ENCODE measurements at regions of chr2 and their contacts with region 1.

Region 1: GRCh38 chr2:176638167-176639015 is 369.1 kb downstream of the MTX2 start:
- DNase-seq: peak; percentile 89
- H3K4me3 ChIP-seq: peak overlapping the region; percentile 75 to 82
- H3K27ac ChIP-seq: peak overlapping the region; percentile 73 to 96
- H3K4me1 ChIP-seq: peaks cover 26 to 28% of the 10 kb centered on the region in 2 experiments; a peak in 3 of 4 replicates
- H3K27me3 ChIP-seq: no peaks in the 10 kb centered on the region
- CTCF ChIP-seq: peak; percentile 91
- EP300 ChIP-seq: peak in 1 of 2 experiments; percentile 74; a peak in 1 of 4 replicates
- RAD21 ChIP-seq: peak; percentile 81

Region 2: GRCh38 chr2:176118601-176119339 is 519.6 kb before region 1 on chr2:
- CTCF ChIA-PET with region 1: interaction called, 1,047 read pairs
- POLR2A ChIA-PET with region 1: interaction called, 19 read pairs
- DNase-seq: peak; percentile 66
- H3K4me3 ChIP-seq: no peak overlapping the region
- H3K27ac ChIP-seq: no peak overlapping the region
- H3K4me1 ChIP-seq: peaks cover 0 to 17% of the 10 kb centered on the region in 2 experiments; a peak in 1 of 4 replicates
- H3K27me3 ChIP-seq: peaks cover 40% of the 10 kb centered on the region
- CTCF ChIP-seq: peak; percentile 66
- EP300 ChIP-seq: no peak
- RAD21 ChIP-seq: peak; percentile 41

Region 3: GRCh38 chr2:176140513-176141317 is 497.7 kb before region 1 on chr2:
- CTCF ChIA-PET with region 1: interaction called, 1,047 read pairs
- POLR2A ChIA-PET with region 1: interaction called, 21 read pairs
- DNase-seq: peak; percentile 96
- H3K4me3 ChIP-seq: peak overlapping the region; percentile 61 to 79
- H3K27ac ChIP-seq: peak overlapping the region; percentile 58 to 63
- H3K4me1 ChIP-seq: peaks cover 5 to 27% of the 10 kb centered on the region in 2 experiments; a peak in 2 of 4 replicates
- H3K27me3 ChIP-seq: no peaks in the 10 kb centered on the region
- CTCF ChIP-seq: peak; percentile 87
- EP300 ChIP-seq: no peak
- RAD21 ChIP-seq: peak; percentile 80

Region 4: DNA sequence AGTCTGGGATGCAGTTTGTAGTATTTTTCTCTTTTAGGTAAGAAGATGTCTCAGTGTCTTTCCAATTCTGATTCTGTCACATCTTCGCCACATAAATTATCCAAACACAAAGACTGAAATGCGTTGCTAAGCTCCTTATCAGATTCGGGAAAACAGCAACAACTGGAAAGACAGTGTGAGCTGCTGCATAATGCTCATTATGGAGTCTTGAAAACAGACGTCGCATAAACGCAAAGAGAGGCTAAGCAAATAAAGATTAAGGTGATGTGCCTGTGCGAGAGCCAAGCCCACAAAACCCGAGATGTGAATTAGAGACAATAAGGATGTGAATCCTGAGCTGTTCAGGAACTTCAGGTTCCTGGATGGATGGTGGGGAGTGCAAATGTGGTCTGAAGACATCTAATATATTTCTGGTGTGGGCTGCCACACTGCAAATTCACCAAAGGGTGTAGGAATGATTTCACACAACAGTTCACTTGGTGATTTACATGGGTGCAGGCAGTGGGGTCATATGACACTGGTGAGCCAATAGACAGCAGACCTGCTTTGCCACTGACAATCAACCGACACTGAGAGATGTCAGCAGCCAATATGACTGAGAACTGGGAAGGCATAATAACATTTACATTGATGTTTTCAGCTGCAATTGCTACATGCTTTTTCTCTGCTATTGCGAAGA is 173.4 kb before region 1 on chr2:
- CTCF ChIA-PET with region 1: interaction called, 11 read pairs
- POLR2A ChIA-PET with region 1: interaction called, 4 read pairs
- DNase-seq: peak; percentile 58
- H3K4me3 ChIP-seq: peak overlapping the region in 1 of 2 experiments; percentile 4; a peak in 1 of 4 replicates
- H3K27ac ChIP-seq: peak overlapping the region in 1 of 2 experiments; percentile 88; a peak in 2 of 4 replicates
- H3K4me1 ChIP-seq: peaks cover 9 to 15% of the 10 kb centered on the region in 2 experiments; a peak in 3 of 4 replicates
- H3K27me3 ChIP-seq: no peaks in the 10 kb centered on the region
- CTCF ChIP-seq: no peak
- EP300 ChIP-seq: no peak
- RAD21 ChIP-seq: no peak

Region 5: DNA sequence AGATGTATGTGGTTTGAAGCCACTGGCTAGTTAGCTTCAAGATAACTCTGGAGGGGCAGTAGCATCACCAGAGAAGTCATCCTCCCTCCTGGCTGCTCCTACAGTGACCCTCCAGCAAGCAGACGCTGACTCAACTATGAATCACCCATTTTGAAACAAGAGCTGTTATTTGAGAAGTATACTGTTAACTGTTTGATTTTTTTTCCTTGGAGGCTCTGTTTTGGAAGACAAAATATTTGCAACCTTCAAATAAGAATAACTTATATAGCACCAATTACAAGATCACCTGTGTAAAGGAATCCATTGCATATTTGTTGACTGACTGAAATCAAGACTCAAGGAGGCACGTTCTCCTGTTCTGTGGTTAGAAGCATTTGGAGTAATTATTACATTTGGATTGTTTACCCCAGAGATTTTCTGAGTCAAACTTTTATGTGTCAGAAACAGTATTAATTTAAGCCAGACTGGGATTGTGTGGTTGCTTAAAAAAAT is 55.4 kb before region 1 on chr2:
- CTCF ChIA-PET with region 1: interaction called, 21 read pairs
- POLR2A ChIA-PET with region 1: interaction called, 6 read pairs
- DNase-seq: no peak
- H3K4me3 ChIP-seq: no peak overlapping the region; a peak in 1 of 4 replicates
- H3K27ac ChIP-seq: peak overlapping the region; percentile 68 to 84
- H3K4me1 ChIP-seq: peaks cover 21 to 23% of the 10 kb centered on the region in 2 experiments; a peak in 3 of 4 replicates
- H3K27me3 ChIP-seq: no peaks in the 10 kb centered on the region
- CTCF ChIP-seq: no peak
- EP300 ChIP-seq: peak in 1 of 2 experiments; percentile 76; a peak in 2 of 4 replicates
- RAD21 ChIP-seq: no peak

Region 6: GRCh38 chr2:176626796-176627195 is 11.6 kb before region 1 on chr2:
- CTCF ChIA-PET with region 1: interaction called, 11 read pairs
- POLR2A ChIA-PET with region 1: no interaction called
- DNase-seq: no peak
- H3K4me3 ChIP-seq: no peak overlapping the region
- H3K27ac ChIP-seq: no peak overlapping the region
- H3K4me1 ChIP-seq: no peaks in the 10 kb centered on the region
- H3K27me3 ChIP-seq: no peaks in the 10 kb centered on the region
- CTCF ChIP-seq: no peak
- EP300 ChIP-seq: no peak
- RAD21 ChIP-seq: no peak

Measured in SK-N-SH (cell line).